ENCODE measurements at regions of chr18 and their contacts with region 1.

Region 1: GRCh38 chr18:25832001-25832604 is 258.3 kb downstream of the SS18 start:
- DNase-seq: peak; percentile 37
- H3K4me3 ChIP-seq: no peak overlapping the region
- H3K27ac ChIP-seq: no peak overlapping the region
- H3K4me1 ChIP-seq: no peaks in the 10 kb centered on the region
- H3K27me3 ChIP-seq: no peaks in the 10 kb centered on the region
- CTCF ChIP-seq: peak; percentile 50 to 66 (median 55)
- EP300 ChIP-seq: no peak
- POLR2A ChIP-seq: no peak

Region 2: DNA sequence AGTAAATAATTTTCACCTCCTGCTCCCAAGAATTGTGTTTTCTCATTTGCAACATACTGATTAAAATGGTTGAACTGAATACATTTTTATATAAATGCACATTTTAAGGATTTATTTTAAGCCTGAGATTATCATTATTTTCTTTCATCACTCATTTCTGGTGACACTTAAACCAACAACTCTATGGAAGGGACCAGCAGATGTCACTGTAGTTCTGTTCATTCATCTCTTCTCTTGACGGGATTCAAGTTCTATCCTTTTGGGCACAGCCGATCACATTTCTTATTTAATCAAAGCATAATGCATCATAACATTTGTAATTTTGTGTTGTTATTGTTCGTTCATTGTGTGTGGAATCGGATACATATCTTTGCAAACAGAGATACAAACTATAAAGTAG is 953.8 kb before region 1 on chr18:
- in situ Hi-C with region 1: loop called in 1 of 4 experiments (anchors 10 kb)
- intact Hi-C with region 1: no loop called
- DNase-seq: no peak
- H3K4me3 ChIP-seq: no peak overlapping the region
- H3K27ac ChIP-seq: no peak overlapping the region
- H3K4me1 ChIP-seq: no peaks in the 10 kb centered on the region
- H3K27me3 ChIP-seq: no peaks in the 10 kb centered on the region
- CTCF ChIP-seq: peak; percentile 36 to 55 (median 51)
- EP300 ChIP-seq: no peak
- POLR2A ChIP-seq: no peak

Region 3: DNA sequence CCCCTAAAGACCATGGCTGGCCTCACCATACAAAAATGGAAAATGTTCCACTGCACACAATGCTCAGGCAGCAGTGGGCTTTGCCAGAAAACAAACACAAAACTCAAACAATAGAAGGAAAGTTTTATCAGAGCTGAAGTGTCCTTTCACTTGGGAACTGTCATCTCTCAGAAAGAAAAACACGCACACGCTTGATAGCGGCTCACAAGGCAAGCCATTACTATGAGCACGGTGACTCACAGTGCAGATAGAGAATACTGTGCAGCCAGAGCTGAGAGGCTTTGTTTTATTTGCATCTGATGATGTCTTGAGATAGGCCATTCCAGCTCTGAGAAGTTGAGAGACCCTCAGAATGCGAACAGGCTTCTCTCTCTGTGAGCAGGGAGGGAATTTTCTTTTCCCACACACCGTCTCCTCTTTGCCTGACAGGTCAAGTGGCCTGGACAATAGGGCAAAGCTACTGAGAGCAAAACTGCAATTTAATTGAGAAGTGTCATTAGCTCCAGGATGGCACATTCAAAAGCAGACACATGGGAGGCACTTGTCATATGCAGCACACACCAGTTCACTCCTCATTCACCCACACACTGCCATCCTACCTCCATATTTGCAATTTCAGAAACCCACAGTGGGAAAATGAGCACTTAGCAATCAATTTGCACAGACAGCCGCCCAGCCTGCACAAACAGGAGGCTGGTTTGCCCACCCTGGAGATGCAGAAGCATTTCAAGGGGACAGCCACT is 21.8 kb after region 1 on chr18:
- in situ Hi-C with region 1: no loop called
- intact Hi-C with region 1: loop called (anchors 1 kb)
- DNase-seq: no peak
- H3K4me3 ChIP-seq: no peak overlapping the region
- H3K27ac ChIP-seq: no peak overlapping the region
- H3K4me1 ChIP-seq: no peaks in the 10 kb centered on the region
- H3K27me3 ChIP-seq: no peaks in the 10 kb centered on the region
- CTCF ChIP-seq: no peak
- EP300 ChIP-seq: no peak
- POLR2A ChIP-seq: no peak